ENCODE measurements at regions of chr5 and their contacts with region 1.

Region 1: GRCh38 chr5:178153573-178154343 is at the start of gene NHP2:
- DNase-seq: peak; percentile 92 to 99
- H3K4me3 ChIP-seq: peak within 1 kb of the TSS; percentile 63 to 77
- H3K27ac ChIP-seq: peak within 1 kb of the TSS; percentile 72 to 74
- H3K4me1 ChIP-seq: peaks cover 7 to 14% of the 10 kb centered on the region in 2 donors
- H3K27me3 ChIP-seq: no peaks in the 10 kb centered on the region
- CTCF ChIP-seq: no peak
- total RNA-seq, gene NHP2: 55.1 TPM

Region 2: DNA sequence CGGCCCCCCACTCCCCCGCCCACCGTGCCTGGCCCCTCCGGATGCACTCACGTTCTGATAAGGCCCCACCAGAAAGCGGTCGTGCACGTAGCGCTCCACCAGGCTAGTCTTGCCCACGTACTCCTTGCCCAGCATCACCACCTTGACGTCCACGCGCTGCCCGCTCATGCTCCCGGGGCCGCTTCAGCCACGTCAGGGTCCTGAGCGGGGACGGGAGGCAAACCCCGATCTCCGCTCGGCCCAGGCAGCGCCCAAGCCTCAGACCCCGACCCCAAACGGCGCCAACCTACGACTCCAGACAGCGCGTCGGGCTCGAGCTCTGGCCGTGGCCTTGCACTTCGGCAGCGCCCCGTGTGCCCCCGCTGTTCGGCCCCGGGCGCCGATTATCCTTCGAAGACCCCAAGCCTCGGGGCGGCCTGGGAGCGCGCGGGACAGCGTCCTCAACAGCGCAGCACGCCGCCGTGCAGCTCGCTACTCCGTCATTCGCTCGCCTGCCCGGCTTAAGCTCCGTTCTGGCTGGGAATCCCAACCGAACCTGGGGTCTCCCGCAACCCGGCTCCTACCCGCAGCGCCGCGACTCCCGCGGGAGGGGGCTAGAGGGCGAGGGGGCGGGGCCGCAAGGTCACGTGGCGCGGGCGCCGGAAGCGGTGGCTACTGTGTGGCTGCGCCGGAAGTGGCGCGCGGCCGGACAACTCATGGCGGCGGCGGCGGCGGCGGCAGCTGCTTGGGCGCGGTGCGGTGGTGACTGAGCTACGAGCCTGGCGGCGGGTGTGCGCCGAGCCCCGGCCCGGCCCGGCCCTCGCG is 850.4 kb before region 1 on chr5 and contains the starts of genes PRELID1 and RAB24:
- intact Hi-C with region 1: loop called (anchors 10 kb)
- DNase-seq: peak in 1 of 2 donors; percentile 94
- H3K4me3 ChIP-seq: peak within 1 kb of the TSS; percentile 72 to 90
- H3K27ac ChIP-seq: peak within 1 kb of the TSS; percentile 80 to 88
- H3K4me1 ChIP-seq: peaks cover 3 to 31% of the 10 kb centered on the region in 2 donors
- H3K27me3 ChIP-seq: no peaks in the 10 kb centered on the region
- CTCF ChIP-seq: peak in 2 of 3 experiments; percentile 30 to 43
- total RNA-seq, gene PRELID1: 376 TPM
- total RNA-seq, gene RAB24: 68.8 TPM

Region 3: DNA sequence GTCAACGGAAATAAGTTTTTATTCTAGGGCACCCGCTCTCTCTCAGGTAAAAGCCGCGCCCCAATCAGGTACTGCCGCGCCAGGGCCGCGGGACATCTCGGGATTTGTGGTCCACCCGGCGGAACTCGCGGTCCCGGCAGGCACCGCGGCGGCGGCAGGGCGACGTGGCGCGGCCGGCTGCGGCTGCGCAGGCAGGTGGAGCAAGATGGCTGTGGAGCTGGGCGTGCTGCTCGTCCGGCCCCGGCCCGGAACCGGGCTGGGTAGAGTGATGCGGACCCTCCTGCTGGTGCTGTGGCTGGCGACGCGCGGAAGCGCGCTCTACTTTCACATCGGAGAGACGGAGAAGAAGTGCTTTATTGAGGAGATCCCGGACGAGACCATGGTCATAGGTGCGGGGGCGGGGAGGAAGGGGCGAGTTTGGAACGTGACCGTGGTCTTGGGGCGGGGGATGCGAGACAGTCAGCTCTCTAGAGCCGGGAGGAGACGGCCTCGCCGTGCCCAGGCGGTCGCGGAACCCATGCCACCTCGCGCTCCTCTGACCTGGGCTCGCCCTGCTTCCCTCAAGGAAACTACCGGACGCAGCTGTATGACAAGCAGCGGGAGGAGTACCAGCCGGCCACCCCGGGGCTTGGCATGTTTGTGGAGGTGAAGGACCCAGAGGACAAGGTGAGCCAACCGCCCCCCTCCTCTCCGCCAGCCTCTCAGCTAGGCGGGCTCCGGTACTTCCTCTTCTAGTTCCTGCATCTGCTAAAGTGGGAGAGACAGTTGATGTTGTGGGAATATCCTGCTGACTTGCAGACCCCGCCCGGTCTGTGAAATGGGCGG is 561.5 kb before region 1 on chr5 and contains the start of gene TMED9:
- intact Hi-C with region 1: loop called (anchors 10 kb)
- DNase-seq: peak; percentile 43 to 93
- H3K4me3 ChIP-seq: peak within 1 kb of the TSS; percentile 79 to 87
- H3K27ac ChIP-seq: peak within 1 kb of the TSS; percentile 70 to 87
- H3K4me1 ChIP-seq: peaks cover 7 to 15% of the 10 kb centered on the region in 2 donors
- H3K27me3 ChIP-seq: no peaks in the 10 kb centered on the region
- CTCF ChIP-seq: no peak
- total RNA-seq, gene TMED9: 113 TPM

Region 4: GRCh38 chr5:178130604-178131485 is 22.9 kb before region 1 on chr5 and contains the start of gene RMND5B:
- intact Hi-C with region 1: loop called (anchors 1 kb)
- DNase-seq: peak in 1 of 2 donors; percentile 89
- H3K4me3 ChIP-seq: peak within 1 kb of the TSS; percentile 78 to 80
- H3K27ac ChIP-seq: peak within 1 kb of the TSS; percentile 93 to 95
- H3K4me1 ChIP-seq: peaks cover 0 to 12% of the 10 kb centered on the region in 2 donors
- H3K27me3 ChIP-seq: no peaks in the 10 kb centered on the region
- CTCF ChIP-seq: no peak
- total RNA-seq, gene RMND5B: 81.6 TPM

Region 5: DNA sequence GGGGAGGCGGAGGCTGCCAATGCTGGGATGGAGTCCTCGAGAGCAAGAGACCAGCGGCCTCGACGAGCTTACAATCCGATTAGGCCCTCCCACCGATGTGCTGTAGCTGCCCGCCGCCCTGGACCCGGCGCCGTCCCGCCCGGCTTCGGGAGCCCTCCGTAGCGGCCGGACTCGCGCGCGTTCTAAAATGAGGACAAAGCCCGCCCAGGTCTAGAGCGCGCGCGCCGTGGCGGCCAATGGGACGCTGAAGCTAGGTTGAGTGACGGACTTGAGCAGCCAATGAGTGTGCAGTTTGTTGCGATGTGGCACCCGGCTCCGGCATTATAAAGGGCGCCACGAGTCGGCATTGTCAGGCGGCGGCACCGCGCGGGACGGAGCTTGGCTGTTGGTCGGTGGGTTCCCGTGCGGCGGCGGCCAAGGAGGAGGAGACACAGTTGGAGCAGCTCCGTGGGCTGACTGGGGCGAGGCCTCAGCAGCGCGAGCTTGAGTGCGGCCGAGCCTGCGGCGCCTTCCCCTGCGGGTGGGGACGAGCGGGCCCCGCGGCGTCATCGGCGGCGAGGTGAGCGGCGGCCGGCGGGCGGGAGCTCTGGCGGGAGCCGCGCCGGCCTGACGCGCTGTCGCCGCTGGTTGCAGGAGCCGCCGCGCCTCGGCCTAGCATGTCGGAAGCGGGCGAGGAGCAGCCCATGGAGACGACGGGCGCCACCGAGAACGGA is 50.6 kb after region 1 on chr5 and contains the start of gene HNRNPAB:
- intact Hi-C with region 1: loop called (anchors 1 kb)
- DNase-seq: peak; percentile 82 to 97
- H3K4me3 ChIP-seq: peak within 1 kb of the TSS; percentile 97 to 100
- H3K27ac ChIP-seq: peak within 1 kb of the TSS; percentile 92 to 96
- H3K4me1 ChIP-seq: peaks cover 8 to 17% of the 10 kb centered on the region in 2 donors
- H3K27me3 ChIP-seq: no peaks in the 10 kb centered on the region
- CTCF ChIP-seq: no peak
- total RNA-seq, gene HNRNPAB: 99.2 TPM

Region 6: GRCh38 chr5:178221282-178221681 is 67.5 kb after region 1 on chr5:
- intact Hi-C with region 1: no loop called
- DNase-seq: no peak
- H3K4me3 ChIP-seq: no peak overlapping the region
- H3K27ac ChIP-seq: no peak overlapping the region
- H3K4me1 ChIP-seq: no peaks in the 10 kb centered on the region
- H3K27me3 ChIP-seq: no peaks in the 10 kb centered on the region
- CTCF ChIP-seq: no peak

Region 7: GRCh38 chr5:178232124-178232919 is 78.6 kb after region 1 on chr5 and contains the start of gene PHYKPL:
- intact Hi-C with region 1: loop called (anchors 2 kb)
- DNase-seq: peak in 1 of 2 donors; percentile 84
- H3K4me3 ChIP-seq: peak within 1 kb of the TSS; percentile 81 to 87
- H3K27ac ChIP-seq: peak within 1 kb of the TSS; percentile 97
- H3K4me1 ChIP-seq: peaks cover 10 to 18% of the 10 kb centered on the region in 2 donors
- H3K27me3 ChIP-seq: no peaks in the 10 kb centered on the region
- CTCF ChIP-seq: peak in 1 of 3 experiments; percentile 10
- total RNA-seq, gene PHYKPL: 89.3 TPM

Region 8: GRCh38 chr5:178404987-178405386 is 251.2 kb after region 1 on chr5:
- intact Hi-C with region 1: no loop called
- DNase-seq: no peak
- H3K4me3 ChIP-seq: no peak overlapping the region
- H3K27ac ChIP-seq: no peak overlapping the region
- H3K4me1 ChIP-seq: no peaks in the 10 kb centered on the region
- H3K27me3 ChIP-seq: no peaks in the 10 kb centered on the region
- CTCF ChIP-seq: no peak

Measured in ascending aorta (tissue), 2 donors.